A673 (cell line): ENCODE measurements at regions of chr4 and their contacts with region 1.

Region 1: DNA sequence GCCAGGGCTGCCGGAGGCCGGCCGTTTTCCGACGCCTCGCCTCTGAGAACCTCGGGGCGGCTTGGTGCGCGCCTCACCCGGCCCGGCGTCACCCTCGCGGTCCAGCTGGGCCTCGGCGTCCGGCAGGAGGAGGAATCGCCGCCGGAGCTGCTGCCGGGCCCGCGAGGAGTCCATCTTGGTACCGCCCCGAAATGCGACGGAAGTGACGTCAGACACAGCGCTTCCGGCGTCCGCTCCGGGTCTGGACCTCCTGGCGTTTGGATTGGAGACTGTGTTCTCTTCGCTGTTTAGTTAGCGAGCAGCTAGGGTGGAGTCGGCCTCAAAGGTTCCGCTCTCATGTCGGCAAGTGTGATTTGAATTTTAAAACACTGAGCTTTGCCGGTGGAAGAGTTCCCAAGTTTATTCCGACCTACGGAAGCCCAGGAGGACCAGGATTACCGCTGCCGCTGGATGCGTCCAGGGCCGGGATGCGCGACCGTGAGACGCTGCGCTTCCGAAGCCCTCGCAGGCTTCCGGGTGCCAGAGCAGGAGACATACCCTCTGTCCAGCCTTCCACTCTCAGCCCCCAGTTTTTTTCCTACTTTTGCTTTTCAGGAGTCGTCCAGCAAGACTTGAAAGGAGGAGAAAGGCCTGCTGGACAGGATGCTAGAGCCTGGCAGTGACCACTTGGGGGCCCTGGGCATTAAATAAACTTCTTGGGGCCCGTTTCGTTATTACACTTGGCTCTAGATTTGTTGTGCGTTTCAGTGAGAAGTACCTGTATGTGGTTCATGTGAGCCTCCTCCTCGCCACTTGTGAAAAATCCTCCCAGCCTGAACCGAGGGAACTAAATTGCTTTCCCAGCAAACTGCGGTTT is at the start of gene TMEM128:
- DNase-seq: peak; percentile 95
- H3K4me3 ChIP-seq: peak within 1 kb of the TSS; percentile 87
- H3K27ac ChIP-seq: peak within 1 kb of the TSS; percentile 92
- H3K4me1 ChIP-seq: peaks cover 4% of the 10 kb centered on the region
- H3K27me3 ChIP-seq: no peaks in the 10 kb centered on the region
- CTCF ChIP-seq: no peak
- total RNA-seq, gene TMEM128: 16.6 and 19.8 TPM in 2 replicates

Region 2: DNA sequence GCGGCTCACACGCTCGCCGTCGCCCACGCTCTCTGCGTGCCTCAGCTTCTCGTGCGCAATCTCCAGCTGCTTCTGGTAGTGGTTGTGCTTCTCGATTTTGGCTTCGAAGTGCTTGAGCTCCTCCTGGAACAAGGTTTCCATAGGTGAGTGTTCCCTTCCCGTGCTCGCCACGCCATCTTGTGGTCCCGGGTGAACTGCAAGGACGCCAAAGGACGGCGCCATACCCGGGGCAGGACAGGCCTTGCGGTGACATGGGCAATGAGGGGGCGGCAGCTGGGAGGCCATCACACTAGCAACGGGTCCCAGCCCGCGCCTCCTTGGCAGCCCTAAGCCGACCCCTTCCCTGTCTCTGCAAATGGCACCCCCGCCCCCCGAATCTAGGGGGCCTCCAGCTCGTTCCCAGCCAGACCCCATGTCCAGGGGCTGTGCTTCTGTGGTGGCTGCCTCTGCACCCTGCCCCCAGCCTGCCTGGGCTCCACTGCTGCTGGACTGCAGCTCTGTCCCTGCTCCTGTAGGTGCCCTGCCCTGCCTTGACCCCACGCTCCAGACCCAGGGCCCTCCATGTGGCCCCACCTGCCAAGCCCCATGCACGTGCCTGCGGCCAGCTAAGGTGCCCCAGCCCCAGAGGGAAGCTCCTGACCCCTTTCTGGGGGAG is 733.3 kb before region 1 on chr4:
- CTCF ChIA-PET with region 1: no interaction called
- POLR2A ChIA-PET with region 1: no interaction called
- intact Hi-C with region 1: no loop called
- DNase-seq: no peak
- H3K4me3 ChIP-seq: no peak overlapping the region
- H3K27ac ChIP-seq: no peak overlapping the region
- H3K4me1 ChIP-seq: no peaks in the 10 kb centered on the region
- H3K27me3 ChIP-seq: no peaks in the 10 kb centered on the region
- CTCF ChIP-seq: peak; percentile 43

Region 3: DNA sequence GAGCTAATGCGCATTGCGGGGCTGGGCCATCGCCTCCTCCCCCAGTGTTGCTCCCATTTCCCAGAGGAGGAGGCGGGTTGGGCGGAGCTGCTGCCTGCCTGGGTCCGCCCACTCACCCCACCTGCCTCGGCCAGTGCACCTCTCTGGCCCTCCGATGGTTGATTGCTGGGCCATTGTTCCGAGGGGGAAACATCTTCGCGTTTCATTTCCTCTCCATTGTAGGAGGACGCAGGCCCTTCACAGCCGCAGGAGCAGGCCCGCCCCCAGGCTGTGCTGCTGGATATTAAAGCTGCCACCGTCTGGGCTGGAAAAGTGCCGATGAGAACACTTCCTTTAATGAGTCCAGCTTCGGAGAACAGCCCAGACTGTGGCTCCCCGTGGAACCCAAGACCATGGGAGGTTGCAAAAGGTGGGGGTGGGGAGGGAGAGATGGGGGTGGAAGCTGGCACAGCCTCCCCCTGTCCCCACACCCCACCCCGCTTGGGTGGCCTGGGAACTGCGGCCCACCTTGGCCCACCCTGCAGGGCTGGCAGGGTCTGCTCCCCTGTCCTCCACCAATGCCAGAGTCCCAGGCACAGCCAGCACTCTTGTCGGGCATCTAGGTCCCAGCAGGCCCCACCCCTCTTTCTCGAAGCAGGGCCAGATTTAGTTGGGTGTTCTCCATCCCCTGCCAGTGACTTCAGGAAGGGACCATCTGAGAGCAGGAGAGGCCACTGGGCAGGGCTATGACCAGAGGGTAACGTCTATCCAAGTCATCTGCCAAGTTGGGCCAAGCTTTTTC is 385.4 kb before region 1 on chr4:
- CTCF ChIA-PET with region 1: no interaction called
- POLR2A ChIA-PET with region 1: no interaction called
- intact Hi-C with region 1: no loop called
- DNase-seq: no peak
- H3K4me3 ChIP-seq: no peak overlapping the region
- H3K27ac ChIP-seq: no peak overlapping the region
- H3K4me1 ChIP-seq: no peaks in the 10 kb centered on the region
- H3K27me3 ChIP-seq: no peaks in the 10 kb centered on the region
- CTCF ChIP-seq: no peak

Region 4: DNA sequence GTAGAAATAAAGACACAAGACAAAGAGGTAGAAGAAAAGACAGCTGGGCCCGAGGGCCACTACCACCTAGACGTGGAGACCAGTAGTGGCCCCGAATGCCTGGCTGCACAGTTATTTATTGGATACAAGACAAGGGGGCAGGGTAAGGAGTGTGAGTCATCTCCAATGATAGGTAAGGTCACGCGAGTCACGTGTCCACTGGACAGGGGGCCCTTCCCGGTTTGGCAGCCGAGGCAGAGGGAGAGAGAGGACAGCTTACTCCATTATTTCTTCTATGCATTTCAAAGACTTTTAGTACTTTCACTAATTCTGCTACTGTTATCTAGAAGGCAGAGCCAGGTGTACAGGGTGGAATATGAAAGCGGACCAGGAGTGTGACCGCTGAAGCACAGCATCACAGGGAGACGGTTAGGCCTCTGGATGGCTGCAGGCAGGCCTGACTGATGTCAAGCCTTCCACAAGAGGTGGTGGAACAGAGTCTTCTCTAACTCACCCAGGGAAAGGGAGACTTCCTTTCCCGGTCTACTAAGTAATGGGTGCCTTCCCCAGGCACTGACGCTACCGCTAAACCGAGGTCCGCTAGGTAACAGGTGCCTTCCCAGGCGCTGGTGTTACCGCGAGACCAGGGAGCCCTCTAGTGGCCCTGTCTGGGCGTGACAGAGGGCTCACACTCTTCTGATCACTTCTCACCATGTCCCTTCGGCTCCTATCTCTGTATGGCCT is 86.7 kb after region 1 on chr4:
- CTCF ChIA-PET with region 1: no interaction called
- POLR2A ChIA-PET with region 1: no interaction called
- intact Hi-C with region 1: loop called (anchors 1 kb)
- DNase-seq: peak; percentile 58
- H3K4me3 ChIP-seq: no peak overlapping the region
- H3K27ac ChIP-seq: no peak overlapping the region
- H3K4me1 ChIP-seq: no peaks in the 10 kb centered on the region
- H3K27me3 ChIP-seq: no peaks in the 10 kb centered on the region
- CTCF ChIP-seq: peak; percentile 84